Transverse colon (tissue), 4 donors: ENCODE measurements at regions of chr17 and their contacts with region 1.

Region 1: GRCh38 chr17:17752089-17752820 is 71.0 kb downstream of the RAI1 start:
- DNase-seq: peak; percentile 98
- H3K4me3 ChIP-seq: peak overlapping the region; percentile 42 to 66 (median 46)
- H3K27ac ChIP-seq: peak overlapping the region; percentile 83 to 91 (median 90)
- H3K4me1 ChIP-seq: peaks cover 13 to 42% (median 29%) of the 10 kb centered on the region in 4 donors
- H3K27me3 ChIP-seq: no peaks in the 10 kb centered on the region
- CTCF ChIP-seq: peak in 2 of 5 experiments; percentile 18 to 25
- EP300 ChIP-seq: no peak
- POLR2A ChIP-seq: peak; percentile 74

Region 2: GRCh38 chr17:17790637-17791464 is 38.6 kb after region 1 on chr17:
- in situ Hi-C with region 1: no loop called
- intact Hi-C with region 1: loop called (anchors 1 kb)
- DNase-seq: no peak
- H3K4me3 ChIP-seq: no peak overlapping the region
- H3K27ac ChIP-seq: no peak overlapping the region
- H3K4me1 ChIP-seq: peaks cover 18 to 39% (median 25%) of the 10 kb centered on the region in 4 donors
- H3K27me3 ChIP-seq: no peaks in the 10 kb centered on the region
- CTCF ChIP-seq: no peak
- EP300 ChIP-seq: no peak
- POLR2A ChIP-seq: no peak